CD4-positive, alpha-beta T cell (primary cell): ENCODE measurements at regions of chr6 and their contacts with region 1.

Region 1: DNA sequence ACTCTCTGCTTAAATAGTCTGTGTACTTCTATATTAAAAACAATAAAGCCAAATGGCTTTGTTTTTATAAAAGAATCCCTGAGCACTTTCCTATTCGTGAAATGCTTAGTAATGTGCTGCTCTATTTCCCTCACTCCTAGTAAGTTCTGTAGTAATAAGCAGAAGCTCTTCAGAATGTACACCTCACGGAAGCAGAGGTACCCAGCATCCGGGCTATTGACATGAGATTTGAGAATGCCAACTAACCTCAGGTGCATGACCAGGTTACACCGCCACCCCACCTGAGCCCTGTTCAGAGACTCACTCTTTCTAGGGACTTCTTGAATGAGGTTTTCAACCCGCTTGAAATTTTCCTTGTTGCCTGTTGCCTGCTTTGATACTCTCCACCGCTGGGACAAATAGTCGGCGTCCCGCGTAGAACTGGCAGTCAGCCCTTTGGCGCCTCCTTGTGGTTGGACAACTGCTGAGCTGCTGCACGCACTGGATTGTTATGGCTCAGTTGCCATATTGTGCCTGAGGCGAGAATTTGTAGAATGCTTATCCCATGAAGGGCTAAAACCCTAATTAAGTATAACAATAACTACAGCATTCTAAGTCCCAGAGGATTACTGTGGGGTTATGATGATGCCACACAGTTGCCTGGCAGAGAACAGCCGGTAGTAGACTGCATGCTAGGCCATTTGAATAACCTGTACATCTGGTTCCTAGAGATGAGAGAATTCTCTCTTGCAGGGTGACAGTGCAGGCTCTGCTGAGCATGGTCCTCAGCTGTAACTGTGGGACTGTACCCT is 95.4 kb downstream of the KHDC1L start:
- DNase-seq: peak; percentile 55 to 86 (median 74)
- ATAC-seq: peak; percentile 72
- H3K4me3 ChIP-seq: no peak overlapping the region
- H3K4me3 Mint-ChIP-seq: no peak overlapping the region
- H3K27ac ChIP-seq: no peak overlapping the region
- H3K27ac Mint-ChIP-seq: no peak overlapping the region
- H3K4me1 ChIP-seq: peaks cover 3% of the 10 kb centered on the region
- H3K4me1 Mint-ChIP-seq: no peaks in the 10 kb centered on the region
- H3K27me3 ChIP-seq: no peaks in the 10 kb centered on the region
- H3K27me3 Mint-ChIP-seq: peaks cover 11% of the 10 kb centered on the region
- CTCF ChIP-seq: peak; percentile 87

Region 2: GRCh38 chr6:72411872-72412708 is 717.8 kb before region 1 on chr6:
- CTCF ChIA-PET with region 1: interaction called, 46 read pairs
- POLR2A ChIA-PET with region 1: no interaction called
- intact Hi-C with region 1: loop called (anchors 1 kb)
- DNase-seq: peak; percentile 50 to 87 (median 67)
- ATAC-seq: peak; percentile 99
- H3K4me3 ChIP-seq: no peak overlapping the region
- H3K4me3 Mint-ChIP-seq: no peak overlapping the region
- H3K27ac ChIP-seq: no peak overlapping the region
- H3K27ac Mint-ChIP-seq: no peak overlapping the region
- H3K4me1 ChIP-seq: no peaks in the 10 kb centered on the region
- H3K4me1 Mint-ChIP-seq: no peaks in the 10 kb centered on the region
- H3K27me3 ChIP-seq: no peaks in the 10 kb centered on the region
- H3K27me3 Mint-ChIP-seq: peaks cover 11% of the 10 kb centered on the region
- CTCF ChIP-seq: peak; percentile 100

Region 3: GRCh38 chr6:72522719-72523141 is 607.1 kb before region 1 on chr6:
- CTCF ChIA-PET with region 1: no interaction called
- POLR2A ChIA-PET with region 1: no interaction called
- intact Hi-C with region 1: loop called (anchors 1 to 10 kb)
- DNase-seq: peak in 8 of 14 experiments; percentile 4 to 47 (median 22)
- ATAC-seq: no peak
- H3K4me3 ChIP-seq: no peak overlapping the region
- H3K4me3 Mint-ChIP-seq: no peak overlapping the region
- H3K27ac ChIP-seq: no peak overlapping the region
- H3K27ac Mint-ChIP-seq: no peak overlapping the region
- H3K4me1 ChIP-seq: no peaks in the 10 kb centered on the region
- H3K4me1 Mint-ChIP-seq: no peaks in the 10 kb centered on the region
- H3K27me3 ChIP-seq: no peaks in the 10 kb centered on the region
- H3K27me3 Mint-ChIP-seq: peaks cover 6% of the 10 kb centered on the region
- CTCF ChIP-seq: no peak

Region 4: DNA sequence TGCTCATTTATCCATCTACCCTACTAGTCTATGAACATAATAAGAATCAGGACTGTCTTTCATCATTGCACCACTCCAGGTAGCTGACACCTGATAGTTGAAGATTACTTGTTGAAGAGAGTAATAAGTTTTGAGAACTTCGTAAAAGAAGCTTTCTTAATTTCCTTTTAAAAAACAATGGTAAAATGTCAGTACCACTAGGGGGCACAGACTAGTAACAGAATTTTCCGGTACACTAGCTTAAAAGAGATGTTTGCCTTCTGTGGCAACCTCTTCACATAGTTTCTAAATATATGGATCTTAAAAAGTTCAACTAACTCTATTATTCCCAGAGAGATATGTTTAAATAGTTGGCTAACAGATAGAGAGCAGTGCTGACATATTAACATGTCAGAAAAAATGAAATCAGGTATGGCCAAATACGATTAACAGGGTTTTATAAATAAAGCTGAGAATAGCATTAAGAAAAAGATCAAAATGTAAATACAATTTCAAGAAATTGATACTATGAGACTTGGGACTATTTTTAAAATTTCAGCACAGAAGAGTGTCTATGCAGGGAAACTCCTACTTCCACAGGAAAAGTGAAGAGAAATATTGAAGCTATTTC is 513.3 kb before region 1 on chr6:
- CTCF ChIA-PET with region 1: interaction called, 25 read pairs
- POLR2A ChIA-PET with region 1: interaction called, 7 read pairs
- intact Hi-C with region 1: loop called (anchors 2 kb)
- DNase-seq: peak in 3 of 14 experiments; percentile 45 to 63 (median 54)
- ATAC-seq: no peak
- H3K4me3 ChIP-seq: no peak overlapping the region
- H3K4me3 Mint-ChIP-seq: peak overlapping the region; percentile 23
- H3K27ac ChIP-seq: no peak overlapping the region
- H3K27ac Mint-ChIP-seq: peak overlapping the region; percentile 4
- H3K4me1 ChIP-seq: peaks cover 23% of the 10 kb centered on the region
- H3K4me1 Mint-ChIP-seq: peaks cover 43% of the 10 kb centered on the region
- H3K27me3 ChIP-seq: no peaks in the 10 kb centered on the region
- H3K27me3 Mint-ChIP-seq: peaks cover 13% of the 10 kb centered on the region
- CTCF ChIP-seq: peak; percentile 63

Region 5: GRCh38 chr6:72622094-72622940 is 507.5 kb before region 1 on chr6:
- CTCF ChIA-PET with region 1: interaction called, 25 read pairs
- POLR2A ChIA-PET with region 1: interaction called, 3 read pairs
- intact Hi-C with region 1: loop called in 1 of 2 experiments (anchors 2 kb)
- DNase-seq: peak in 12 of 14 experiments; percentile 34 to 78 (median 50)
- ATAC-seq: peak; percentile 33
- H3K4me3 ChIP-seq: peak overlapping the region; percentile 77
- H3K4me3 Mint-ChIP-seq: peak overlapping the region; percentile 95
- H3K27ac ChIP-seq: no peak overlapping the region
- H3K27ac Mint-ChIP-seq: peak overlapping the region; percentile 24
- H3K4me1 ChIP-seq: peaks cover 37% of the 10 kb centered on the region
- H3K4me1 Mint-ChIP-seq: peaks cover 45% of the 10 kb centered on the region
- H3K27me3 ChIP-seq: no peaks in the 10 kb centered on the region
- H3K27me3 Mint-ChIP-seq: peaks cover 21% of the 10 kb centered on the region
- CTCF ChIP-seq: peak; percentile 0

Region 6: DNA sequence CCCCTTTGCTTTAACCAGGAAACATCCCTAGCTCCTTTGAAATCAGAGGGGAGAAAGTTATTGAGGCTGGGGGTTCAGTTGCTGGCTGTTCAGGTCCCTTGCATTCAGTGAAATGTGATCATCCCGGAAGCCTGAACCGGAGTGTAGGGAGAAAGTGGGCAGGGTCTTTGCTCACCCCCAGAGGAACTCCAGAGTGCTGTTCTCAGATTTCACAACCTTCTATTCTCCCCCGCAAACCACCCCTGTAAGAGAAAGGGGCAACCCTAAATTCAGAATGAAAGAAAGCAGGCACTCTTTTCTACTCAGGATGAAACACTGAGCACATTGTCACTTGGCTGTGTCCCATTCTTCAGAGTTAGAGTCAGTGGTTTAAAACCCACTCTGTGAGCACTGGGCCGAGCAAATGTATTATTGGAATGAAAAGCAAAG is 44.4 kb before region 1 on chr6:
- CTCF ChIA-PET with region 1: no interaction called
- POLR2A ChIA-PET with region 1: no interaction called
- intact Hi-C with region 1: no loop called
- DNase-seq: no peak
- ATAC-seq: no peak
- H3K4me3 ChIP-seq: no peak overlapping the region
- H3K4me3 Mint-ChIP-seq: no peak overlapping the region
- H3K27ac ChIP-seq: no peak overlapping the region
- H3K27ac Mint-ChIP-seq: no peak overlapping the region
- H3K4me1 ChIP-seq: no peaks in the 10 kb centered on the region
- H3K4me1 Mint-ChIP-seq: no peaks in the 10 kb centered on the region
- H3K27me3 ChIP-seq: no peaks in the 10 kb centered on the region
- H3K27me3 Mint-ChIP-seq: no peaks in the 10 kb centered on the region
- CTCF ChIP-seq: no peak

Region 7: GRCh38 chr6:73180763-73181619 is 51.1 kb after region 1 on chr6:
- CTCF ChIA-PET with region 1: no interaction called
- POLR2A ChIA-PET with region 1: no interaction called
- intact Hi-C with region 1: loop called in 1 of 2 experiments (anchors 2 kb)
- DNase-seq: peak in 4 of 14 experiments; percentile 5 to 60 (median 58)
- ATAC-seq: peak; percentile 67
- H3K4me3 ChIP-seq: no peak overlapping the region
- H3K4me3 Mint-ChIP-seq: peak overlapping the region; percentile 16
- H3K27ac ChIP-seq: no peak overlapping the region
- H3K27ac Mint-ChIP-seq: no peak overlapping the region
- H3K4me1 ChIP-seq: peaks cover 3% of the 10 kb centered on the region
- H3K4me1 Mint-ChIP-seq: no peaks in the 10 kb centered on the region
- H3K27me3 ChIP-seq: no peaks in the 10 kb centered on the region
- H3K27me3 Mint-ChIP-seq: no peaks in the 10 kb centered on the region
- CTCF ChIP-seq: peak; percentile 80

Region 8: GRCh38 chr6:73194744-73195143 is 64.9 kb after region 1 on chr6:
- CTCF ChIA-PET with region 1: no interaction called
- POLR2A ChIA-PET with region 1: no interaction called
- intact Hi-C with region 1: no loop called
- DNase-seq: no peak
- ATAC-seq: no peak
- H3K4me3 ChIP-seq: no peak overlapping the region
- H3K4me3 Mint-ChIP-seq: no peak overlapping the region
- H3K27ac ChIP-seq: no peak overlapping the region
- H3K27ac Mint-ChIP-seq: no peak overlapping the region
- H3K4me1 ChIP-seq: no peaks in the 10 kb centered on the region
- H3K4me1 Mint-ChIP-seq: no peaks in the 10 kb centered on the region
- H3K27me3 ChIP-seq: no peaks in the 10 kb centered on the region
- H3K27me3 Mint-ChIP-seq: no peaks in the 10 kb centered on the region
- CTCF ChIP-seq: no peak

Region 9: DNA sequence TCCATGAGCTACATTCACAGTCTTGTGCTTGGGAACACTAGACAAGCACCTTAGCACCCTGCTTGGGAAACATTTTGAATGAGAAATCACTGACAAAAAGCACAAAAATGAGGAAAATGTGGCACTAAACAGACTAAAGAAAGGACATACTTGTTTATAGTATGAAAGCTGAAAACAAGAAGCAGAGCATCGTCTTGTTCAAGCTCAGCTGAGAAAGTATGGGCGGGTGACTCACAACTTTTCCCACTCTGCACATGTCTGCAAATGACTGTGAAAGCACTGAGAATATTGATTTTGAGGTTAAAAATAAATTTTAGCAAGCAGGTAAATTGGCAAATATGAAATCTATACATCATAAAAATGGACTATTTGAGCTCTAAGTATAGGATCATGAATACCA is 1350.7 kb after region 1 on chr6:
- CTCF ChIA-PET with region 1: no interaction called
- POLR2A ChIA-PET with region 1: no interaction called
- intact Hi-C with region 1: no loop called
- DNase-seq: no peak
- ATAC-seq: no peak
- H3K4me3 ChIP-seq: no peak overlapping the region
- H3K4me3 Mint-ChIP-seq: no peak overlapping the region
- H3K27ac ChIP-seq: no peak overlapping the region
- H3K27ac Mint-ChIP-seq: no peak overlapping the region
- H3K4me1 ChIP-seq: no peaks in the 10 kb centered on the region
- H3K4me1 Mint-ChIP-seq: no peaks in the 10 kb centered on the region
- H3K27me3 ChIP-seq: no peaks in the 10 kb centered on the region
- H3K27me3 Mint-ChIP-seq: no peaks in the 10 kb centered on the region
- CTCF ChIP-seq: no peak